ENCODE measurements at regions of chr2 and their contacts with region 1.

Region 1: GRCh38 chr2:240369801-240370585 is 65.5 kb upstream of the GPC1 start:
- DNase-seq: peak; percentile 96 to 100
- H3K4me3 ChIP-seq: peak overlapping the region; percentile 36; the same call in 1 of the 2 replicates
- H3K27ac ChIP-seq: peak overlapping the region; percentile 83
- H3K4me1 ChIP-seq: peaks cover 57% of the 10 kb centered on the region
- H3K27me3 ChIP-seq: no peaks in the 10 kb centered on the region
- CTCF ChIP-seq: no peak

Region 2: GRCh38 chr2:238438856-238439849 is 1930.8 kb before region 1 on chr2:
- CTCF ChIA-PET with region 1: interaction called, 11 read pairs
- POLR2A ChIA-PET with region 1: no interaction called
- intact Hi-C with region 1: no loop called
- DNase-seq: peak; percentile 86 to 89
- H3K4me3 ChIP-seq: no peak overlapping the region
- H3K27ac ChIP-seq: peak overlapping the region; percentile 81
- H3K4me1 ChIP-seq: peaks cover 13% of the 10 kb centered on the region
- H3K27me3 ChIP-seq: no peaks in the 10 kb centered on the region
- CTCF ChIP-seq: no peak

Region 3: DNA sequence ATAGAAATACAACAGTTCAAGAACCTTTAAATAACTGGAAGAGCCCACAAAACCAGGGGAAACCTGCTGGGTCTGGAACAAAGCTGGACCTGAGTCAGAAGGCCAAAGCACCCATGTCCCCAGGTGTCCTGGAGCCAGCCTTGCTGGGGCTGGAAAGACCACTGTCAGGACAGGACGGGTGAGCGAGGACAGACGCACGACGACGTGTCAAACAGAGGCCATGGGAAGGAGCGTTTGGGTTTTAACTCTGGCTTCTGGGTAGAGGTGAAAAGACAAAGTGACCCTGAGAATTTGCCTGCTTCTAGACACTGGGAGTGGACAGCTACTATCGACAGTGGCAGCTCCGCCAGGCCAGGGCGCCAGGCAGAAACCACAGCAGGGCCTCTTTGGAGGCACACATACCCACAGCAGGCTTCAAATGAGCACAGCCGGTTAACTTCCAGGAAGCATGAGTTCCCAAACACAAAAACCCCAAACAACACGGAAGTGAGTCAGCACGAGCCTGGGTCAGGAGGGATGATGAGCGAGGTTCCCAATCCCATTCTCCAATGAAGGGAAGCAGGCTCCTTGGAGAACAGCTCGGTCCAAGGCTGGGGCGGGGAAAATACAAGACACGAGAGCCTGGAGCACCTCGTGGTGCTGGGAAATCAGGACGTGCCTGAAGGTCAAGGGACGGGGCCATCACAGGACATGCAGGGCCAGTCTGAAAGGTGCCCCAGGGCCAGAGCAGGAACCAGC is 1314.1 kb before region 1 on chr2:
- CTCF ChIA-PET with region 1: no interaction called
- POLR2A ChIA-PET with region 1: no interaction called
- intact Hi-C with region 1: no loop called
- DNase-seq: no peak
- H3K4me3 ChIP-seq: no peak overlapping the region
- H3K27ac ChIP-seq: no peak overlapping the region
- H3K4me1 ChIP-seq: no peaks in the 10 kb centered on the region
- H3K27me3 ChIP-seq: no peaks in the 10 kb centered on the region
- CTCF ChIP-seq: no peak

Region 4: GRCh38 chr2:240245706-240246105 is 124.3 kb before region 1 on chr2:
- CTCF ChIA-PET with region 1: interaction called, 21 read pairs
- POLR2A ChIA-PET with region 1: no interaction called
- intact Hi-C with region 1: no loop called
- DNase-seq: peak in 1 of 2 experiments; percentile 18
- H3K4me3 ChIP-seq: no peak overlapping the region
- H3K27ac ChIP-seq: no peak overlapping the region
- H3K4me1 ChIP-seq: peaks cover 6% of the 10 kb centered on the region
- H3K27me3 ChIP-seq: 0 out of 2 replicates have a peak, but pooled peaks cover 7% of the 10 kb centered on the region
- CTCF ChIP-seq: no peak

Region 5: DNA sequence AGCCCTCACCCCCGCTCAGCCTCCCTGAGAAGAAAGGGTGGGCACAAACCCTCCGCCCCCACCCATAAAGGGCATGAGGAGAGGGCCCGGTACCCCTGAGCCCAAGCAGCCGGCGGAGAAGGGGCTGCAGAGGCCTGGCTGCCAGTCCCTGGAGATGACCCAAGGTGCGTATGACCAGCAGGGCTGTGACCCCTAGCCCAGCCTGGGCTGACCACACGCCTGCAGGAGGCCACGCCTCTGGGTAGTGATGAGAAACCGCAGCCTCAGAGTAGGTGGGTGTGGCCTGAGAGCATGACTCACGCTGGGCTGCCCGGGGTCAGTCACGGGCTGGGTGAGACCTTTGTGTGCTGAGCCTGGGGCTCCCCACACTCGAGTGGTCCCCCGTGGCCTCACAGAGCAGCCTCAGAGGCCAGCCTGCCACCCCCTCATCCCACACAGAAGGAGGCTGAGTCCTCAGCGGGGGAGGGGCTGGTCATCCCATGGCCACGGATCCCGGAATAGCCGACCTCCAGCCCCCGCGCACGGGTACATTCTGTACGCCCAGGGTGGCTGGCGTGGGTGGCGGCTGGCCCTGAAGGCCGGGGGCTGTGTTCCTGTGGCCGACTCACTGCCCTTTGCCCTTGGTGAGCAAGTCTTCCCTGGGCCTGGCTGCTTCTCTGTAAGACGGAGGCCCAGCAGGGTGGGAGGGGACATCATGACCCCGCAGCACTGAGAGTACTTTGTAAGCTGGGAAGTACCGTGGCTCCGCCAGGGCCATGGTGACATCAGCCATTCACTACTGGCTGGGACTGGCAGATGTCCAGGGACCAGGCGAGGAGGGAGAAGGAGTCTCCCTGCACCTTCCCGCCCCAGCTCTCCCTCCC is 118.8 kb before region 1 on chr2:
- CTCF ChIA-PET with region 1: no interaction called
- POLR2A ChIA-PET with region 1: interaction called, 7 read pairs
- intact Hi-C with region 1: loop called (anchors 1 kb)
- DNase-seq: peak; percentile 92 to 98
- H3K4me3 ChIP-seq: peak overlapping the region; percentile 48; the same call in 1 of the 2 replicates
- H3K27ac ChIP-seq: peak overlapping the region; percentile 86
- H3K4me1 ChIP-seq: peaks cover 39% of the 10 kb centered on the region
- H3K27me3 ChIP-seq: no peaks in the 10 kb centered on the region
- CTCF ChIP-seq: no peak

Region 6: DNA sequence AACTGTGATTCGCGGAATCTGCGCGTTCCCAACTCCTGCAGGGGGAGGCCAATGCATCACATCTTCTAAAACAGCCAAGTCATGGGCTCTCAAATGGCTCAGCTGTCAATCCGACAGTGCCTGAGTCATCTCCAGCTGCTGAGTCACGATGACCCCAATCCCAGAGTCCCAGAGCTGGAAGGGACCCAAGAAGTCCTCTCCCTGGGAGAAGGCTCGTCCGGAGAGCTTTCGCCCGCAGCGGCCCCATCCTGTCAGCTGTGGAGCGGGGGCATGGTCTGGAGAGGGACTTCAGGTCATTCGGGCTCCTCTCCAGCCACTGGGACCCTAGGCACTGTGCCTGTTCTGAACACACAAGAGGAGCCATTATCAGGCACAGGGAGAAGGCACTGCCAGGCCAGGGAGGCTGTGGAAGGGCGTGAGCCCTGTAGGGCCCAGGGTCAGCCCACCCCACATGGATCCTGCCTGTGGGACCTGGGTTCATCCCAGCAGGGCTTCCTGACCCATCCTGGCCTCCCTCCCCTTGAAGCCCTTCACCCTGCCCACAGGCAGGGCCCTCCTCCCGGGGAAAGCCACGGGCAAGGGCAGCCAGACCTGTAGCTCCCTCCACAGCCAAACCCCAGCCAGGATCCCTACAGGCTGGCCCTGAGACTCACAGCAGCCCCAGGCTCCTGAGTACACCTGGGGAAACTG is 17.8 kb after region 1 on chr2:
- CTCF ChIA-PET with region 1: interaction called, 8 read pairs
- POLR2A ChIA-PET with region 1: interaction called, 10 read pairs
- intact Hi-C with region 1: loop called (anchors 1 kb)
- DNase-seq: peak; percentile 88 to 95
- H3K4me3 ChIP-seq: peak overlapping the region; percentile 48; the same call in 1 of the 2 replicates
- H3K27ac ChIP-seq: peak overlapping the region; percentile 75
- H3K4me1 ChIP-seq: peaks cover 27% of the 10 kb centered on the region
- H3K27me3 ChIP-seq: no peaks in the 10 kb centered on the region
- CTCF ChIP-seq: no peak

Region 7: DNA sequence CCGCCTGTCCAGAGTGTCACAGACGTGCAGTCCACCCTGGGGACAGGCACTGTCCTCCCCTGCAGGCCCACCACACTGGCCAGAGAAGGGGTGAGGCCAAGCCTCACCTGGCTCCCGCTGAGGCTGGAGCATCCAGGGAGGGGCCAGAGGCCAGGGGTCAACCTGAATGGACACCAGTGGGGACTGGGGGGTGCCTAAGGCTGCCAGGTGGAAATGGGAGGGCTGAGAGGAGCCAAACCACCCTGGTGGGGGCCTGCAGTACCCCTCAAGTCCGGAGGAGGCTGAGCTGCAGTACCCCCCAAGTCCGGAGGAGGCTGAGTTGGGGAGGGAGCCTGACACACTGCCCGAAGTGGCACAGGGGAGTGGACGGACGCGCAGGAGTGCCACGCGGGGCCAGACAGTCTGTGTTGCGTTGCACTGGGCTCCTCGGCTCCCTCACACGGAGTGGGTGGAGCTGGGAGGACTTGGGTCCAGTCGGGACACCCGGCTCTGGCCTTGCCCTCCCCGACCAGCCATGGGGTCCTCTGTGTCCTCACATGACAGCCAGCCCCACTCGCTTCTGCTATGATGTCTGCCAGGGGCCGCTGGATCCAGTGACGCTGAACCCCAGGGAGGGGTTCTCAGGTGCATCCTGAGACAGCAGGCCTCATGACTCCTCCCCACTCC is 43.1 kb after region 1 on chr2:
- CTCF ChIA-PET with region 1: no interaction called
- POLR2A ChIA-PET with region 1: no interaction called
- intact Hi-C with region 1: no loop called
- DNase-seq: no peak
- H3K4me3 ChIP-seq: no peak overlapping the region
- H3K27ac ChIP-seq: no peak overlapping the region
- H3K4me1 ChIP-seq: no peaks in the 10 kb centered on the region
- H3K27me3 ChIP-seq: no peaks in the 10 kb centered on the region
- CTCF ChIP-seq: no peak

Region 8: GRCh38 chr2:240426797-240427721 is 57.1 kb after region 1 on chr2:
- CTCF ChIA-PET with region 1: interaction called, 3 read pairs
- POLR2A ChIA-PET with region 1: interaction called, 16 read pairs
- intact Hi-C with region 1: loop called (anchors 1 kb)
- DNase-seq: peak; percentile 91 to 95
- H3K4me3 ChIP-seq: peak overlapping the region; percentile 9; the same call in 1 of the 2 replicates
- H3K27ac ChIP-seq: peak overlapping the region; percentile 78
- H3K4me1 ChIP-seq: peaks cover 25% of the 10 kb centered on the region
- H3K27me3 ChIP-seq: no peaks in the 10 kb centered on the region
- CTCF ChIP-seq: no peak

Region 9: GRCh38 chr2:240452457-240453256 is 82.7 kb after region 1 on chr2:
- CTCF ChIA-PET with region 1: interaction called, 5 read pairs
- POLR2A ChIA-PET with region 1: interaction called, 6 read pairs
- intact Hi-C with region 1: loop called (anchors 1 kb)
- DNase-seq: peak; percentile 58 to 97
- H3K4me3 ChIP-seq: peak overlapping the region; percentile 60; the same call in 1 of the 2 replicates
- H3K27ac ChIP-seq: no peak overlapping the region
- H3K4me1 ChIP-seq: peaks cover 44% of the 10 kb centered on the region
- H3K27me3 ChIP-seq: no peaks in the 10 kb centered on the region
- CTCF ChIP-seq: no peak

Region 10: DNA sequence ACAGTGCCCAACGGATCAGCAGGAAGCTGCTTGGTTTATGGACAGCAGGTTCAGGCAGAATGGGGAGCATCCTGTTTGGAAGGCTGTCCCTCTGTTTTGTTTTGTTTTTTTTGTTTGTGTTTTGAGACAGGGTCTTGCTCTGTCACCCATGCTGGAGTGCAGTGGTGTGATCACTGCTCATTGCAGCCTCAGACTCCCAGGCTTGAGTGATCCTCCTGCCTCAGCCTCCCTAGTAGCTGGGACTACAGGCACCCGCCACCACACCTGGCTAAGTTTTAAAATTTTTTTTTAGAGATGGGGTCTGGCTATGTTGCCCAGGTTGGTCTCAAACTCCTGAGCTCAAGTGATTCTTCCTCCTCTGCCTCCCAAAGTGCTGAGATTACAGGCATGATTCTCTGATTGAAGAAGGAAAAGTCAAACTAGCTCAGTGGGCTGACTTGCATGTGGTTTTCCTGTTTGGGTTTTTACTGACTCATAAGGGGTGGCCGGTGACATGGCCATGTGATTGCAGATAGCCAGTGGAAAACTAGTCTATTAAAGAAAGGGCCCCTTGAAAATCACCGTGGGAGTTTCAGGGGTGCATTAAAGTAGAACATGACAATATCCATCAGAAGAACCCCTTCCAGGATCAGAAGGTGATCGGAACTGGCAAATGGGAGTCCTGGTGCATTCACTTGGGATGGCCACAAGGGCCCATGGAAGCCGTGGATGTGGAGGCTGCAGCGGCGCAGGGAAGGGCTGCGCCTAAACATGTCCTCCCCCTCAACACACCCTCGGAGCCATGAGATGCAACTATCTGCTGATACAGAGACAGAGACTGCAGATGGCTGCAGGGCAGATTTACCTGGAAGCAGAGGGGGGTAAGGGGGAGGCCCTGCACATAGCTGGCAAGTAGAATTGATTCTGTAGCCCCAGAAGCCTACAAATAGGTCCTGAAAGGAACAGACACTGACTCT is 286.2 kb after region 1 on chr2:
- CTCF ChIA-PET with region 1: no interaction called
- POLR2A ChIA-PET with region 1: no interaction called
- intact Hi-C with region 1: no loop called
- DNase-seq: no peak
- H3K4me3 ChIP-seq: no peak overlapping the region
- H3K27ac ChIP-seq: no peak overlapping the region
- H3K4me1 ChIP-seq: no peaks in the 10 kb centered on the region
- H3K27me3 ChIP-seq: peaks cover 95% of the 10 kb centered on the region
- CTCF ChIP-seq: no peak

Measured in PC-9 (cell line).